Caco-2 (cell line): ENCODE measurements at regions of chr22 and their contacts with region 1.

Region 1: DNA sequence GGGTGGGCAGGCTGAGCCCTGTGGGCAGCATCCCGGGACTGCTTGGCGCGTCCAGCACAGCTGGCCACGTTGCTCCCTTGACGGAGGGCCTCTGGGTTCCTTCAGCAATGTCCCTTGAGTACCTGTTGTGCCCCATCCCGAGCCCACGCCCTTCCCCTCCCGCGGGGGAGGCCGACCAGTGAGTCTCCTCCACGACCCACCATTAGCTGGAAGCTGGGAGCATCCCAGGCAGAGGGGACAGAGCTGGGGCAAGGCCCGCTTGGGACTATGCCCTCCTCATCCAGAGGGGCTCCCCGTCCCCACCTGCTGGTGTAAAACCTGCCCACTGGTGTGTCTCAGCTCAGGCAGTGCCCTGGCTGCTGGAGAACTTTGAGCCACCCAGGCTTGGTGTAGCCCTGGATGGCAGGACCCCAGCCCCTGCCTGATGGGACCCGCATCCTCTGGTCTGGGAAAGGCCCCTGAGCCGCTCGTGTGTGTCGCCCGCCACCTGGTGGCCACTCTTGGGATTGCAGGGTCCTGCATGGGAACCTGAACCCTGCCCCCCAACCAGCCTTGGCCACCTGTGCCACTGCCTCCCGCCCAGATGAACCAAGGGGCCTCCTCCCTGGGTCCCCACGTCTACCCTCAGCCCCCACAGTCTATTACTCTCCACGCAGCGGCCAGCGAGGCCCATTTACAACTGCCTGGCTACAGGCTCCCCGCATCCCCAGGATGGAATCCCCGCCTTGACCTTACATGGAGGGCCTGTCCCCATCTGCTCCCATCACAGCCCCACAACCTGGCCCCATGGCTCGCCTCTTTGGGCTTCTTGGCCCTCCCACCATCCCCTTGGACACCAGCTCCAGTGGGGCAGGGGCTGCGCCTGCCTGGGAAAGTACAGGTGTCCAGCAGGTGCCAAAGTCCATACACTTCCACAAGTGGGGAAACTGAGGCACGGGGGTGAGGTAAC is 16.6 kb upstream of the ARHGAP8 start:
- DNase-seq: peak; percentile 82 to 92
- H3K4me3 ChIP-seq: no peak overlapping the region
- H3K4me3 Mint-ChIP-seq: peak overlapping the region; percentile 14
- H3K27ac Mint-ChIP-seq: peak overlapping the region; percentile 84
- H3K4me1 ChIP-seq: peaks cover 71% of the 10 kb centered on the region
- H3K4me1 Mint-ChIP-seq: peaks cover 25% of the 10 kb centered on the region
- H3K27me3 ChIP-seq: no peaks in the 10 kb centered on the region
- H3K27me3 Mint-ChIP-seq: no peaks in the 10 kb centered on the region
- CTCF ChIP-seq: peak; percentile 93 to 95

Region 2: DNA sequence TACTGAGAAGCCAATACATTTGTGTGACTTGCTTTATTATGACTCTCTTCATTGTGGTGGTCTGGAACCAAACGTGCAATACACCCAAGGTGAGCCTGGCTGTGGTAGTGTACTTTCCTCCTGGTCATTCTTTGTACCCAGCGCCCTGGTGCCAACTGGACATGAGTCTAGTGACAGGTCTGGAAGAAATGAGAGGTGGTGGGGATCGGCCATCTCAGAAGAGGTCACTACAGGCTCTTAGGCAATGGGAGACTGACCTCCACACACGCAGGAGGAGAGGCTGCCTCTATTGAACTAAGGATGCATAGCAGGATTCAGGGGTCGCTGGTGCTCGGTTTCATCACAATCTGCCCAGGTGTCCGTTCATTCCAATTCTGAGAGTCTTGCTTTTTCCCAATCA is 181.4 kb before region 1 on chr22:
- CTCF ChIA-PET with region 1: no interaction called
- POLR2A ChIA-PET with region 1: no interaction called
- intact Hi-C with region 1: no loop called
- DNase-seq: no peak
- H3K4me3 ChIP-seq: no peak overlapping the region
- H3K4me3 Mint-ChIP-seq: no peak overlapping the region
- H3K27ac Mint-ChIP-seq: no peak overlapping the region
- H3K4me1 ChIP-seq: no peaks in the 10 kb centered on the region
- H3K4me1 Mint-ChIP-seq: no peaks in the 10 kb centered on the region
- H3K27me3 ChIP-seq: no peaks in the 10 kb centered on the region
- H3K27me3 Mint-ChIP-seq: peaks cover 11% of the 10 kb centered on the region
- CTCF ChIP-seq: no peak

Region 3: GRCh38 chr22:44701824-44702478 is 33.9 kb before region 1 on chr22 and contains the start of gene PRR5:
- CTCF ChIA-PET with region 1: interaction called, 3 read pairs
- POLR2A ChIA-PET with region 1: no interaction called
- intact Hi-C with region 1: loop called (anchors 2 kb)
- DNase-seq: peak; percentile 86 to 92
- H3K4me3 ChIP-seq: peak within 1 kb of the TSS; percentile 53
- H3K4me3 Mint-ChIP-seq: peak within 1 kb of the TSS; percentile 89
- H3K27ac Mint-ChIP-seq: peak within 1 kb of the TSS; percentile 79
- H3K4me1 ChIP-seq: peaks cover 58% of the 10 kb centered on the region
- H3K4me1 Mint-ChIP-seq: peaks cover 22% of the 10 kb centered on the region
- H3K27me3 ChIP-seq: no peaks in the 10 kb centered on the region
- H3K27me3 Mint-ChIP-seq: no peaks in the 10 kb centered on the region
- CTCF ChIP-seq: no peak
- total RNA-seq, gene PRR5: 74.8 and 82.8 TPM in 2 replicates